Heart right ventricle (tissue), 16 donors: ENCODE measurements at regions of chr2 and their contacts with region 1.

Region 1: DNA sequence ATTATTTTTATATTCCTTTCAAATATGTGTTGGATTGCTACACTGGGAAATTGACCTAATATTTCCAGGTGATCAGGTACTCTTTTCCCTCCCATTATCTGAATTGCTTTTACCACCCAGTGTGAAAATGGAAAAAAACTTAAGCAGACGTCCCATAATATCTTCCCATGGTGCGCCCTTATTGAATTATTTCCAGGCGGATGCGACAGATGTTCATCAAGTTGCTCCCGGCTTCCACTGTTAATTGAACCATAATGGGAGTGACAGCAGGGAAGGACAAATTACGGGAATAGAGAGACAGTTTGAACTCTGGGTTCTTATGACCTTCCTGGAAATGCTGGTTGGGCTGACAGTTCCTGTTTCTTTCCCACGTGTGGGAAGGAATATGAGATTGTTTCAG is 93.3 kb downstream of the THSD7B start:
- DNase-seq: no peak
- ATAC-seq: no peak
- H3K4me3 ChIP-seq: no peak overlapping the region
- H3K27ac ChIP-seq: no peak overlapping the region
- H3K4me1 ChIP-seq: no peaks in the 10 kb centered on the region
- H3K27me3 ChIP-seq: no peaks in the 10 kb centered on the region
- CTCF ChIP-seq: no peak

Region 2: DNA sequence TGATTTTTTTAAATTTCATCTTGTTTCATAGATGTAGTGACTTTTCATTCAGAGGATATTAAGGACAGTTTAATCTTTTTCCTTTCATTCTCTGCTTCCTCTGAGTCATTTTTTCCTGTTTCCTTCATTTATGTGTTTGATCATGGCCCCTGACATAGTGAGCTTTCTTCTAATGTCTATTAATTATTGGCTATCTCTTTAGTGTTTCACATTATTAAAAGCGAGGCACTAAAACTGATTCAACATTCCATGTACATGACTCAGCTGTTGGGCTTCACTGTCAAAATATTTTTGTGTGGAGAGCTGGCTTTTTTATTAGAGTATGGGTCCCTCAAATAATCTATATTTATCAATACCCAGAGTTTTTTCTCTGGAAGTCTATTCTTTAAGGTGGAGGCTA is 32.4 kb after region 1 on chr2:
- intact Hi-C with region 1: loop called in 1 of 10 experiments (anchors 2 kb)
- DNase-seq: no peak
- ATAC-seq: no peak
- H3K4me3 ChIP-seq: no peak overlapping the region
- H3K27ac ChIP-seq: no peak overlapping the region
- H3K4me1 ChIP-seq: no peaks in the 10 kb centered on the region
- H3K27me3 ChIP-seq: no peaks in the 10 kb centered on the region
- CTCF ChIP-seq: no peak

Region 3: GRCh38 chr2:136980303-136980702 is 121.6 kb after region 1 on chr2:
- intact Hi-C with region 1: no loop called
- DNase-seq: no peak
- ATAC-seq: no peak
- H3K4me3 ChIP-seq: no peak overlapping the region
- H3K27ac ChIP-seq: no peak overlapping the region
- H3K4me1 ChIP-seq: no peaks in the 10 kb centered on the region
- H3K27me3 ChIP-seq: no peaks in the 10 kb centered on the region
- CTCF ChIP-seq: no peak